ENCODE measurements at regions of chr1 and their contacts with region 1.

Region 1: DNA sequence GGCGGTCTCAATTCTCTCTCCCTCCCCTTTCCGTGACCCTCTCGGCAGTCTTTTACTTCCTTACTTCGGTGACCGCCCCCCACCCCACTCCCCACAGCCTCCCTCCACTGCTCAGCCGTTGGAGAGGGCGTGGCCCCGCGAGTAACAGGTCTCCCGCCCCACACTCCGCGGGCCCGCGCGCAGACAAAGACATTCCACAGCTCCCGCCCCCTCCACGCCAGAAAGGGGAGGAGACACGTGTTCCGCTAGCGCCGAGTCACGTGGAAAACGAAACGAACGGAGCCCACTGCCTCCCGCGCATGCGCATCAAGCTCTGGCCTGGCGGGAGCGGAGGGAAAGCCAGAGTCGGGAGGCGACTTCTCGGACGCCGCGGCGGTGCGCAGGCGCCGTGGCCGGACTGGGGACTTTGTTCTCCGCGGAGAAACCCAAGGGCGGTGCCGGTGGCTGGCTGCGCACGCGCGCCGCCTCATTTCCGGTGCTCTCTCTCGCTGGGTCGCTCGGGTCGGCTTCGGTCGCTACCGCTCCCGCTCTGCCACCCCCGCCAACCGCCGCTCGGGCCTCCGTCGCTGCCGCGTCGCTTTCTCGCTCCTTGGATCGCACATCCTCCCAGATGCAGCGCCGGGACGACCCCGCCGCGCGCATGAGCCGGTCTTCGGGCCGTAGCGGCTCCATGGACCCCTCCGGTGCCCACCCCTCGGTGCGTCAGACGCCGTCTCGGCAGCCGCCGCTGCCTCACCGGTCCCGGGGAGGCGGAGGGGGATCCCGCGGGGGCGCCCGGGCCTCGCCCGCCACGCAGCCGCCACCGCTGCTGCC is at the start of gene KHDRBS1:
- DNase-seq: peak; percentile 98
- H3K4me3 Mint-ChIP-seq: peak within 1 kb of the TSS; percentile 94
- H3K27ac Mint-ChIP-seq: peak within 1 kb of the TSS; percentile 94
- H3K4me1 Mint-ChIP-seq: peaks cover 33% of the 10 kb centered on the region
- H3K27me3 Mint-ChIP-seq: no peaks in the 10 kb centered on the region
- total RNA-seq, gene KHDRBS1: 189 to 198 TPM

Region 2: DNA sequence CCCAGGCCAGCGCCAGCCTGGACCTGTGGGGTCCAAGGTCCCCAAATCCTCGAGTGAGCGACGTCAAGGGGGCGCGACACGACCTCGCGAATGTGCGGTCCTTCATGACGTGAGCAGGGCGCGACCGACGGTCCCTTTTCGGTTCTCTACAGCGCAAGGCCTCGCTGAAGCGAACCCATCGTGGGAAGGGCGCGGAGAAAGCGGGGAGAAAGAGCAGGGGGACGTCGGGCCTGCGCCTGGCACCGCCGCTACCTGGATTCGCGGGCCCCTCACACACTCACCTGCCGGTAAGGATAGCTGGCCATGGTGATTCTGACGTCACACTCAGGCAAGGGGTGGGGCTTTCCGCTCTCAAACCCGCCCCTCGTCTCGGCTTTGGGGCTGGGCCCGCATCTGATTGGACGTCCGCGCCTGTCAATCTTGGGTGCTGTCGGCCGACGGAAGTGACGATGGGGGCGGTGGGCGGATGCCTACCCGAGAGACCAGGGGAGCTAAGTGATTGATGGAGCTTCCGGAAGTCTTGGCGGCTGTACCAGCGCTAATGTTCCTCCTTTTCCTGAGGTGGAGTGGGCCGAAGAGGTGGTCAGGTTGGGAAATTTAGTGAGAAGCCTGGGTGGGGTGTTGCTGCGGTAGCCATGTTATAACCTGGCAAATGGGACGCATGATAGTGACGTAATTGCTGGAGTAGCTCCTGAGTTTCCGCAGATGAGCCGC is 368.9 kb before region 1 on chr1 and contains the start of gene PEF1:
- CTCF ChIA-PET with region 1: no interaction called
- intact Hi-C with region 1: loop called (anchors 2 kb)
- DNase-seq: peak; percentile 100
- H3K4me3 Mint-ChIP-seq: peak within 1 kb of the TSS; percentile 97
- H3K27ac Mint-ChIP-seq: peak within 1 kb of the TSS; percentile 100
- H3K4me1 Mint-ChIP-seq: peaks cover 17% of the 10 kb centered on the region
- H3K27me3 Mint-ChIP-seq: no peaks in the 10 kb centered on the region
- total RNA-seq, gene PEF1: 79.6 to 80.6 TPM

Region 3: DNA sequence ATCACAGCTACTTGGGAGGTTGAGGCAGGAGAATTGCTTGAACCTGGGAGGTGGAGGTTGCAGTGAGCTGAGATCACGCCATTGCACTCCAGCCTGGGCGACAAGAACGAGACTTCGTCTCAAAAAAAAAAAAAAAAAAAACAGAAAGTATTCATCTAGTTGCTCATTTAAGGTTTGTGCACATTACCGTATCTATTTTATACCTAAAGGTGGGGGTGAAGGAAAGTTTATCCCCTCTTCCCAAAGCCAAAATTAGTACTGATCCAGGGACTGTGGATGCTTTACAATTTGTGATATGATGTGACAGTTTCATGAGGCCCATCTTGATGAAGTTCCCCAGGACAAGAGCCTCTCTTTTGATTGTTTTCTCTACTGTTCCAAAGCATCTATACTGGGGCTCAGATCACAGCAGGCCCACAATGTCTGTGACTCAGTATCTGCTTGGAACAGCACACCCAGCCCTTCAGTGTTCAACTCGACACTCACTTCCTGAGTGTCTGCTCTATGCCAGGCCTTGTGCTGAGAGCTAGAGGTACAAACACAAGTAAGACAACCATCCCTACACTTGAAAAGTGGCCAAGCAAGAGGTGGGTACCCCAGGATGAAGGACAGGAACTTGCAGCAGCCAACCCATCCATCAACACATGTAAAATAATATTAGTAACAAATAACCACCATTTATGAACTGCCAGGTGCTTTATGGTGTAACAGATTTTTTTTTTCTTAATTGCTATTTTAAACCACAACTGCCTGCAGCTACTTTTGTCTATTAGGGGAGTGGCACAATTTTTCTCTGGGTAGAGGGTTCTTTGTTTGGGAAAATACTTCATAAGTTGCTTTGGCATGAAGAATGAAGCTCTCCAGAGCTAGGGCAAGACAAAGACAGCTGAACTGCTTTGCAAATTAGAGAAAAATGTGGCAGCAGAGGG is 28.9 kb before region 1 on chr1:
- CTCF ChIA-PET with region 1: no interaction called
- intact Hi-C with region 1: loop called (anchors 1 kb)
- DNase-seq: peak; percentile 65
- H3K4me3 Mint-ChIP-seq: peak overlapping the region; percentile 44
- H3K27ac Mint-ChIP-seq: peak overlapping the region; percentile 92
- H3K4me1 Mint-ChIP-seq: peaks cover 52% of the 10 kb centered on the region
- H3K27me3 Mint-ChIP-seq: no peaks in the 10 kb centered on the region

Region 4: GRCh38 chr1:32107742-32108661 is 94.4 kb after region 1 on chr1 and contains the start of gene KPNA6:
- CTCF ChIA-PET with region 1: interaction called, 4 read pairs
- intact Hi-C with region 1: loop called (anchors 1 kb)
- DNase-seq: peak; percentile 97
- H3K4me3 Mint-ChIP-seq: peak within 1 kb of the TSS; percentile 99
- H3K27ac Mint-ChIP-seq: peak within 1 kb of the TSS; percentile 94
- H3K4me1 Mint-ChIP-seq: peaks cover 42% of the 10 kb centered on the region
- H3K27me3 Mint-ChIP-seq: no peaks in the 10 kb centered on the region
- total RNA-seq, gene KPNA6: 74.5 to 75.0 TPM

Region 5: GRCh38 chr1:32179443-32180185 is 166.0 kb after region 1 on chr1 and contains the start of gene TXLNA:
- CTCF ChIA-PET with region 1: no interaction called
- intact Hi-C with region 1: loop called (anchors 1 kb)
- DNase-seq: peak; percentile 94
- H3K4me3 Mint-ChIP-seq: peak within 1 kb of the TSS; percentile 86
- H3K27ac Mint-ChIP-seq: peak within 1 kb of the TSS; percentile 96
- H3K4me1 Mint-ChIP-seq: peaks cover 47% of the 10 kb centered on the region
- H3K27me3 Mint-ChIP-seq: no peaks in the 10 kb centered on the region
- total RNA-seq, gene TXLNA: 84.3 to 86.2 TPM